ENCODE measurements at regions of chr1 and their contacts with region 1.

Region 1: DNA sequence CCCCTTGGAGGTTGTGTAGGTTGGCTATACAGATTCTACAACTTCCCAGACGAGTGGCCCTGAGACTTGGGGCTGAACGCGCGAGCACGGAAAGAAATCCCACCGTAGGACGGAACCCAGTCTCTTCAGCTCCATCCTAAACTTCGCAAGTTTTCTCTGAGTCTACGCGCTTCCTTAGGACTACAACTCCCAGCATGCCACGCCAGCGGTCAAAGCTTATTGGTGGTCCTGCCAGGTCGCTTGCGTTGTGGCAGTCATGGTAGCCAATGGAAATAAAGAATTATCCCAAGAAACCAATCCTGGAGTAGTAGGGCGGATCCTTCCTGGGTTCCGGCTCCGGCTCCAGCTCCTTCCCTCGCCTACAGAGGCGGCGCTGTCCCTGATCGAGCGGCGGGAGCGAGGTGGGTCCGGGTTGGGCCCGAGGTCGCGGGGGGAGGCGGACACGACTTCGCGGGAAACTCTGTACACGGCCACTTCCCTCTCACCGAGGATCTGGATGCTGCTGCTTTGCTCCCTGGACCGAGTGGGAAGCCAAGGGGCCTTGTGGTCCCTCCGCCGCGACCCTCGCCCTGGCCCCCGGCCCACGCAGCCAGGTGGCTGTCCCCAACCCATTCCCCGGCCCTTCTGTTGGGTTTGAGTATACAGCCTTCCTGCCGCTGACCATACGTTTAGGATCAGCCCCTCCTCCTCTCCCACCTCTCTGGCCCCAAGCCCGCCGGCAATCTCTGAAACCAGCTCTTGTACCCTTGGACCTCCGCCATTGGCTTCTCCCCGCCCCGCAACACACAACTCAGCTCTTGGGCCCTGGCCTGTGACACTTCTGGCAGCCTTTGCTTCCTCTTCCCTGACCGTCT is at the start of gene ZNF691:
- DNase-seq: peak; percentile 95
- total RNA-seq, gene ZNF691: 6.5 TPM

Region 2: GRCh38 chr1:42462828-42463763 is 383.4 kb before region 1 on chr1 and contains the start of gene CCDC30:
- intact Hi-C with region 1: no loop called
- DNase-seq: peak; percentile 95
- total RNA-seq, gene CCDC30: 2.0 TPM

Region 3: DNA sequence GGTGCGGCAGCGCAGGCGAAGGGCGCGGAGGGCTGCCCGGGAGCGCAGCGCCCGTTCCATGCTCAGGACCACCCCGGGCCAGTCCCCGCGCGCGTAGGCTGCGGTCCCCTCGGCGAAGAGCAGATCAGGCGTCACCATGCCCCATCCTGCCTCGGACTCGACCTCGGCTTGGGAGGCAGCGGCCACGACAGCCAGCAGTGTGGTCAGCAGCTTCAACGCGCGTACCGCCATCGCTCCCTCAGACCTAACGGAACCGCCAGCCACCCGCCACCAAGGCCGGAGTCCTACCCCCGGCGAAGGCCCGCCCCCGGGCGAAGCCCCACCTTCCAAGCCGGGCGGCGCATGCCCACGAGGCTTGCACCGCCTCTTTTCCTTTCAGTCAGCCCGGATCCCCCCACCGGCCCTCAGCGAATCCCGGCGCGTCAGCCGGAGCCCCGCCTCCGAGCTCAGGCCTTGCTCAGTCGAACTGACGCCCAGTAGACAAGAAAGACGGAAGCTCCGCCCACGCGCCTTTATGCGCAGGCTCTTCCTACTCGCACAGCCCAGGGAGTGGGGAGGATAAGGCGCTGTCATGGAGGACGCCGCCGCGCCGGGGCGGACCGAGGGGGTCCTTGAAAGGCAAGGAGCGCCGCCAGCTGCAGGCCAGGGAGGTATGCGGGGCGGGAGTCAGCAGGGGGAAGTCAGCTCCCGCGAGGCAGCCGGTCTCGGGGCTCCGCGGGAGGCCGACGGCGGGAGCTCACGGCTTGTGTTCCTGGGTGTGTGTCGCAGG is 79.6 kb before region 1 on chr1 and contains the starts of genes C1orf50 and P3H1:
- intact Hi-C with region 1: loop called (anchors 2 kb)
- DNase-seq: peak; percentile 100
- total RNA-seq, gene C1orf50: 11.0 TPM
- total RNA-seq, gene P3H1: 12.2 TPM

Region 4: GRCh38 chr1:42886800-42887199 is 40.3 kb after region 1 on chr1:
- intact Hi-C with region 1: no loop called
- DNase-seq: no peak

Region 5: GRCh38 chr1:42981871-42982270 is 135.4 kb after region 1 on chr1:
- intact Hi-C with region 1: no loop called
- DNase-seq: no peak

Region 6: DNA sequence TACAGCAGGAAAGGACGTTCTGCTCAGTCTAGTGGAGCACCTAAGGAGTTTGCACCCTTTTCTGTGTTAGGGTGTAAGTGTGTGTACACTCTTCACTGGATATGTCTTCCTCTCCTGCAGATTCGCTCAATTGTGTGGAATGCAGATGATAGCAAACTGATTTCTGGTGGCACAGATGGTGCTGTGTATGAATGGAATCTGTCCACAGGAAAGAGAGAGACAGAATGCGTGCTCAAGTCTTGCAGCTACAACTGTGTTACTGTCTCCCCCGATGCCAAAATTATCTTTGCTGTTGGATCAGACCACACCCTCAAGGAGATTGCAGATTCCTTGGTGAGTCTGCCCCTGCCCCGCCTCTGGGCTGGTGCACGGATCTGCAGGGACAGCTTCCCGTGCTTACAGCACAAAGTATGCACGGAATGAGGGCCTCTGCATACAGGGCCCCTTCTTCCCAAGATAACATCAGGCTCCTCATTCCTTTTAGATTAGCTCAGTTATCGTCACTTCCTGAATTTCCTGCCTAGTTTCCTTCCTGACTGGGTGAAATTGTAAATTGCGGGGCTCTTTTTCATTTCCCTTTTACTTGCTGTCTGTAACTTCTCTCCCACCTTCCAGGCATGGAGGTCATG is 360.2 kb after region 1 on chr1:
- intact Hi-C with region 1: no loop called
- DNase-seq: no peak

Measured in cardiac septum (tissue), 1 donor.